ENCODE measurements at regions of chr10 and their contacts with region 1.

Region 1: DNA sequence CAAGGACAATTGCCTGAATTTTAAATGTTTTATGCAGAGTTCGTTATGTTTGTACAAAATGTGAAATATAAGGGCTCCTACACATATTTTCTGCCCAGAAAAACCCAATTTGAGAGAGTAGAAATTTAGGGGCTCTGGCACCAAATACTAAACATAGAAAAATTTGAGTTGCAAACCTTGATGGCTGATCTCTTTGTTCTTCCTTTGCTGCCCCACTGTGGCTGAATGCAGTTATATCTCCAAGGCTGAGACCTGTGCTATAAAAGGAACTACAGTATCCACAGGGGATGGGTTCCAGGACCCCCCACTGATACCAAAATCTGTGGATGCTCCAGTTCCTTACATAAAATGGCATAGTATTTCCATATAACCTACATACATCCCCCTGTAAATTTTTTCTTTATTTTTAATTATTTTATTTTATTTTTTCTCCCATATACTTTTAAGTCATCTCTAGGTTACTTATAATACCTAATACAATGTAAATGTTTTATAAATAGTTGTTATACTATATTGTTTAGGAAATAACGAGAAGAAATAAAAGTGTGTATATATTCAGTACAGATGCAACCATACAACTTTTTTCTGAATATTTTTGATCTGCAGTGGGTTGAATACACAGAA is 22.5 kb downstream of the CFAP43 start:
- DNase-seq: peak; percentile 58
- ATAC-seq: peak; percentile 42
- H3K4me3 Mint-ChIP-seq: no peak overlapping the region
- H3K27ac Mint-ChIP-seq: no peak overlapping the region
- H3K4me1 Mint-ChIP-seq: no peaks in the 10 kb centered on the region
- H3K27me3 Mint-ChIP-seq: peaks cover 9% of the 10 kb centered on the region

Region 2: DNA sequence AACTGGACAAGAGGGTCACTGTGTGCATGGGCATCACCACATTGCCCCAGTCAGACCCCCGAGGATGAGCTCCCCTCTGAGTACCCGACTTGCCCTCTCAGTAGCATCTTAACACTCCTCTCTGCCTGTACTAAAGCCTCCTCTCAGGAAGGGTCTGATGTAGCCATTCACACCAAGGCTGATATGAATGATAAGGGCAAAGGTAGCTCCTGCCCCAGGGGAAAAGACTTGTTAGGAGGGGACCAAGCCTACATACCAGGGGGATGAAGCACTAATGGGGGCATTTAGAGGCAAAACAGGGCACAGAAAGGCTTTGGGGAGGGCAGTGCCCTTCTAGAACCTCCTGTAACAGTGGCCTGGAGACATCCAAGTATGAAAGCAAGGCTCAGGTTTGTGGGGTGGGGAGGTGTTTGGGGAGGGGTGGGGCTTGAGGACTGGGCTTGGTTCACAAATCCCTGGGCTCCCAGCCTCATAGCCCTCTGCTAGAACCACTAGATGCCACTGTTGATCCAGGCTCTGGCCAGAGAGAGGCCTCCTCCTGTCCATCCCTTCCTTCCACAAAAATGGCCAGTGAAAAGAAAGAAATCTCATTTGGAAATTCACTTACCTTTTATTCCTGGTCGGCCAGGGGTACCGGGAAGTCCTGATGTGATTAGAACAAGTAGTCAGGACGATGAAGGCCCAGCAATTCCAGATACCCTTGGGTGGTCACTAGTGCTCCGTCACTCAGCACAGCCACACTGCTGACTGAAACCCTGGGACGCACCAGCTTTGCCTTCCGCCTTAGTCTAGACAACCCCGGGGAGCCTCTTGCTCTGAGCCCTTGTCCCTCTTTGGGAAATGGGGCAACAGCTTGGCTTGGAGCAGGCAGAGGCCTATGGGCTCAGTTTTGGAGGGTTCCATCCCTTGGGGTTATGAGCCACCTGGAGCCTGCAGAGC is 164.3 kb before region 1 on chr10:
- CTCF ChIA-PET with region 1: no interaction called
- POLR2A ChIA-PET with region 1: no interaction called
- intact Hi-C with region 1: loop called (anchors 5 to 10 kb)
- DNase-seq: peak; percentile 39
- ATAC-seq: peak; percentile 64
- H3K4me3 Mint-ChIP-seq: no peak overlapping the region
- H3K27ac Mint-ChIP-seq: no peak overlapping the region
- H3K4me1 Mint-ChIP-seq: peaks cover 5% of the 10 kb centered on the region
- H3K27me3 Mint-ChIP-seq: peaks cover 2% of the 10 kb centered on the region